ENCODE measurements at regions of chr14 and their contacts with region 1.

Region 1: GRCh38 chr14:75636100-75636692 is 24.5 kb downstream of the ERG28 start:
- DNase-seq: no peak
- H3K4me3 ChIP-seq: no peak overlapping the region
- H3K27ac ChIP-seq: no peak overlapping the region
- H3K4me1 ChIP-seq: no peaks in the 10 kb centered on the region
- H3K27me3 ChIP-seq: no peaks in the 10 kb centered on the region
- CTCF ChIP-seq: no peak

Region 2: GRCh38 chr14:75673345-75674035 is 37.3 kb after region 1 on chr14:
- CTCF ChIA-PET with region 1: no interaction called
- dilution Hi-C with region 1: loop called (anchors 5 kb)
- in situ Hi-C with region 1: no loop called
- intact Hi-C with region 1: no loop called
- DNase-seq: no peak
- H3K4me3 ChIP-seq: no peak overlapping the region
- H3K27ac ChIP-seq: no peak overlapping the region
- H3K4me1 ChIP-seq: peaks cover 11% of the 10 kb centered on the region
- H3K27me3 ChIP-seq: no peaks in the 10 kb centered on the region
- CTCF ChIP-seq: no peak

Region 3: GRCh38 chr14:75941030-75941429 is 304.8 kb after region 1 on chr14:
- CTCF ChIA-PET with region 1: no interaction called
- dilution Hi-C with region 1: no loop called
- in situ Hi-C with region 1: no loop called
- intact Hi-C with region 1: no loop called
- DNase-seq: no peak
- H3K4me3 ChIP-seq: no peak overlapping the region
- H3K27ac ChIP-seq: no peak overlapping the region
- H3K4me1 ChIP-seq: no peaks in the 10 kb centered on the region
- H3K27me3 ChIP-seq: no peaks in the 10 kb centered on the region
- CTCF ChIP-seq: no peak